GM23248 (cell line): ENCODE measurements at regions of chr1 and their contacts with region 1.

Region 1: GRCh38 chr1:235971571-235972310 is 93.1 kb downstream of the NID1 start:
- DNase-seq: peak; percentile 97
- H3K4me3 ChIP-seq: peak overlapping the region; percentile 75
- H3K27ac ChIP-seq: peak overlapping the region; percentile 100
- H3K4me1 ChIP-seq: peaks cover 26% of the 10 kb centered on the region
- H3K27me3 ChIP-seq: no peaks in the 10 kb centered on the region

Region 2: DNA sequence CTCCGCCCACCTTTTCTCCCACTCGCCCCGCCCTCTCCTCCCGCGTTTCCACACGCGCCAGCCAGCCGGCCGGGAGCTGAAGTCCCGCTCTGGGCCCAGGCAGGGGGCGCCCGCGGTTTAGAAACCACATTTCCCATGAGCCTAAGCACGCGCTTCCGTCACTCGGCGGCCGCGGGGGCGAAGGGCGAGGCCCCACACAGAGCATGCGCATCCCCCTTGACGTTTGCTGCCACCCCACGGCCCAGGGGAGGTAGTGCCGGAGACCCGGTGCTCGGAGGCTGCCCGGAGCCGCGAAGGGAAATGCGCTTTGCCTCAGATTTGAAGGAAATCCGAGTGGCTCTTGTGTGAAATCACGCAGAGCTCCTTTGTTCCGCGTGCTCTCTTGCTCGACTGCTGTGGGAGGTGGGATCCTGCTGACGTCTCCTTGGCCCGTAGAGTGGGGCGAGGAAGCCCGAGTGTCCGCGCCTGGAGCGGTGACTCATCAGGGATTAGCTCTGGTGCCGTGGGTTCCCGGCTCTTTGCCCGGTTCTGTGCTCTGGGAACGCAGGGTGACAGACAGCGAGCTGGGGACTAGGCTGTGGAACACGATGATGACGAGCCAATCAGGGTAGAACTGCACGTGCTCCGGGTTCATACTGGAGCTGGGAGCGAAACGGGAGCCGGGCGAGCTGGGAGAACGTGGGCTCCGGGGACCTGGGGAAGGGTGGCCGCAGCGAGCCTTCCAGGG is 467.1 kb before region 1 on chr1:
- in situ Hi-C with region 1: loop called (anchors 25 kb)
- DNase-seq: peak; percentile 100
- H3K4me3 ChIP-seq: peak overlapping the region; percentile 88
- H3K27ac ChIP-seq: peak overlapping the region; percentile 98
- H3K4me1 ChIP-seq: peaks cover 20% of the 10 kb centered on the region
- H3K27me3 ChIP-seq: no peaks in the 10 kb centered on the region

Region 3: DNA sequence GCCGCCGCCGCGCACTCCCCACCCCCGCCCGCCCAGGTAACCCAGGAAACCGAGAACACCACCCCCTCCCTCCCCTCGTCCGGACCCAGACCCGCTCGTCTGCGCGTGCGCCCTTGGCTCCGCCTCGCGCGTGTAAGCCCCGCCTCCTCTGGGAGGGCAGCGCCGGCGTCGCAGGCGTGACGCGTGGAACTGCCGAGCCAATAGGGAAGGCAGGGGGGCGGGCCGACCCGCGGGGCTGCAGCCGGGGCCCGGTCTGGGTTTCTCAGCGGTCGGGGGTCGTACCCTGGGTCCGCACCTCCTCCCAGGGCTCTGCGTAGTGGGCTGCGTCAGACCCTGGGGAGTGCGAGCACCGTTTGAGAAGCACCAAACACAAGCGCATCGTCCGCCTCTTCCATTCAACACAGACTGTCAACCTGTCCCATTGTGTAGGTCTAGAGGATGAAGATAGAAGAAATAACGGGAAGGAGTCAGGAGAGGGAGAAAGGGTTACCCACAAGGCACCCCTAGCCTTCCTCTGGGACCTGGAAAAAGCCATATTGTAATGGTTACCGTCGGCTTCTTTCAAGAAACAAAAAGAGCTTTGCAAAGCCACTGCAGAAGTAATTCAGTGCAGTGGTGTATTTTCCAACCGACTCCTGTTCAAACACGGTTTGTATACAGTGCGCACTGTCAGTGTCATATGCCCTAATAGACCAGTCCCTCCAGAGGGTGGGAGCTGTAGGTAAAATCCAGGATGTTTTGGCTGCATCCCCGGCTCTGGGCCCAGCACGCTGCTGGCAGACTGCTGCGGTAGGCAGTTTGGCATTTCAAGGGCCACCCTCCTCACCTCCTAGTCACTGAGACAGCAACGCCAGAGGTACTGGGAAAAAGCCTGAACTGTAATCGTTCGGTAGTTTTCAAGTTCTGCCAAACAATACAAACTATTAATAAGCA is 104.6 kb before region 1 on chr1:
- in situ Hi-C with region 1: loop called (anchors 25 kb)
- DNase-seq: peak; percentile 97
- H3K4me3 ChIP-seq: peak overlapping the region; percentile 85
- H3K27ac ChIP-seq: peak overlapping the region; percentile 67
- H3K4me1 ChIP-seq: peaks cover 15% of the 10 kb centered on the region
- H3K27me3 ChIP-seq: no peaks in the 10 kb centered on the region